ENCODE measurements at regions of chr1 and their contacts with region 1.

Region 1: DNA sequence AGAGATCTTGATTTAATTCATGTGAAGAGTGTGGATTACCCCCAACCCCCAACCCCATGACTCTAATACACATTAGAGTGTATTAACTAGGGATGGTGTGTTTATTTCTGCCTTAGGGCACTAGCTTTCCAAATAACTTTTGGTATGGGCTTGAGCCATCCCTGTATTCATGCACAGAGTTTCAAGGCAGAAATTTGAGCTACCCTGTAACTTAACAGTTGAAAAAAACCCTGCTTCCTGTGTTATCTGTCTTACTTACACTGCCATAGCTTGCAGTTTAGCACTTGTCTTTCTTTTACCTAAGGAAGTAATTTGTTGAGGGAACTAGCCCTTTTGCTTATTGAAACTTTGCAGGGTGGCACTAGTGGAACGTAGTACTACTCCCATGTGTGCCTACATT is 6.3 kb downstream of the SRSF11 start:
- DNase-seq: peak in 2 of 9 experiments; percentile 7 to 39
- ATAC-seq: peak; percentile 51
- H3K4me3 ChIP-seq: no peak overlapping the region
- H3K4me3 Mint-ChIP-seq: peak overlapping the region; percentile 22
- H3K27ac ChIP-seq: peak overlapping the region in 1 of 2 experiments; percentile 36
- H3K27ac Mint-ChIP-seq: no peak overlapping the region
- H3K4me1 ChIP-seq: peaks cover 54% of the 10 kb centered on the region
- H3K4me1 Mint-ChIP-seq: peaks cover 62% of the 10 kb centered on the region
- H3K27me3 ChIP-seq: no peaks in the 10 kb centered on the region
- H3K27me3 Mint-ChIP-seq: no peaks in the 10 kb centered on the region
- CTCF ChIP-seq: no peak

Region 2: GRCh38 chr1:70169018-70169839 is 58.2 kb before region 1 on chr1:
- CTCF ChIA-PET with region 1: no interaction called
- POLR2A ChIA-PET with region 1: no interaction called
- intact Hi-C with region 1: no loop called
- DNase-seq: no peak
- ATAC-seq: no peak
- H3K4me3 ChIP-seq: no peak overlapping the region
- H3K4me3 Mint-ChIP-seq: no peak overlapping the region
- H3K27ac ChIP-seq: no peak overlapping the region
- H3K27ac Mint-ChIP-seq: no peak overlapping the region
- H3K4me1 ChIP-seq: no peaks in the 10 kb centered on the region
- H3K4me1 Mint-ChIP-seq: no peaks in the 10 kb centered on the region
- H3K27me3 ChIP-seq: no peaks in the 10 kb centered on the region
- H3K27me3 Mint-ChIP-seq: no peaks in the 10 kb centered on the region
- CTCF ChIP-seq: no peak

Region 3: GRCh38 chr1:70190180-70190579 is 37.3 kb before region 1 on chr1:
- CTCF ChIA-PET with region 1: interaction called, 3 read pairs
- POLR2A ChIA-PET with region 1: no interaction called
- intact Hi-C with region 1: loop called in 1 of 2 experiments (anchors 5 kb)
- DNase-seq: no peak
- ATAC-seq: no peak
- H3K4me3 ChIP-seq: no peak overlapping the region
- H3K4me3 Mint-ChIP-seq: no peak overlapping the region
- H3K27ac ChIP-seq: no peak overlapping the region
- H3K27ac Mint-ChIP-seq: no peak overlapping the region
- H3K4me1 ChIP-seq: no peaks in the 10 kb centered on the region
- H3K4me1 Mint-ChIP-seq: peaks cover 20% of the 10 kb centered on the region
- H3K27me3 ChIP-seq: no peaks in the 10 kb centered on the region
- H3K27me3 Mint-ChIP-seq: no peaks in the 10 kb centered on the region
- CTCF ChIP-seq: no peak

Region 4: GRCh38 chr1:70247768-70248167 is 20.3 kb after region 1 on chr1:
- CTCF ChIA-PET with region 1: no interaction called
- POLR2A ChIA-PET with region 1: no interaction called
- intact Hi-C with region 1: loop called in 1 of 2 experiments (anchors 1 kb)
- DNase-seq: no peak
- ATAC-seq: no peak
- H3K4me3 ChIP-seq: no peak overlapping the region
- H3K4me3 Mint-ChIP-seq: no peak overlapping the region
- H3K27ac ChIP-seq: no peak overlapping the region
- H3K27ac Mint-ChIP-seq: no peak overlapping the region
- H3K4me1 ChIP-seq: no peaks in the 10 kb centered on the region
- H3K4me1 Mint-ChIP-seq: peaks cover 4% of the 10 kb centered on the region
- H3K27me3 ChIP-seq: no peaks in the 10 kb centered on the region
- H3K27me3 Mint-ChIP-seq: no peaks in the 10 kb centered on the region
- CTCF ChIP-seq: no peak